MCF 10A (cell line): ENCODE measurements at regions of chr3 and their contacts with region 1.

Region 1: GRCh38 chr3:62665598-62666437 is 209.4 kb downstream of the CADPS start:
- DNase-seq: peak; percentile 85
- H3K4me3 Mint-ChIP-seq: no peak overlapping the region
- H3K27ac Mint-ChIP-seq: no peak overlapping the region
- H3K4me1 Mint-ChIP-seq: peaks cover 7% of the 10 kb centered on the region
- H3K27me3 Mint-ChIP-seq: no peaks in the 10 kb centered on the region
- CTCF ChIP-seq: peak; percentile 86

Region 2: GRCh38 chr3:62615258-62615849 is 50.5 kb before region 1 on chr3:
- CTCF ChIA-PET with region 1: interaction called, 11 read pairs
- POLR2A ChIA-PET with region 1: no interaction called
- intact Hi-C with region 1: no loop called
- DNase-seq: no peak
- H3K4me3 Mint-ChIP-seq: no peak overlapping the region
- H3K27ac Mint-ChIP-seq: no peak overlapping the region
- H3K4me1 Mint-ChIP-seq: peaks cover 34% of the 10 kb centered on the region
- H3K27me3 Mint-ChIP-seq: no peaks in the 10 kb centered on the region
- CTCF ChIP-seq: no peak

Region 3: GRCh38 chr3:62653796-62654195 is 12.0 kb before region 1 on chr3:
- CTCF ChIA-PET with region 1: interaction called, 28 read pairs
- POLR2A ChIA-PET with region 1: no interaction called
- intact Hi-C with region 1: no loop called
- DNase-seq: no peak
- H3K4me3 Mint-ChIP-seq: no peak overlapping the region
- H3K27ac Mint-ChIP-seq: no peak overlapping the region
- H3K4me1 Mint-ChIP-seq: no peaks in the 10 kb centered on the region
- H3K27me3 Mint-ChIP-seq: no peaks in the 10 kb centered on the region
- CTCF ChIP-seq: no peak

Region 4: GRCh38 chr3:62833531-62833930 is 167.7 kb after region 1 on chr3:
- CTCF ChIA-PET with region 1: interaction called, 4 read pairs
- POLR2A ChIA-PET with region 1: no interaction called
- intact Hi-C with region 1: loop called (anchors 2 kb)
- DNase-seq: peak; percentile 18
- H3K4me3 Mint-ChIP-seq: no peak overlapping the region
- H3K27ac Mint-ChIP-seq: no peak overlapping the region
- H3K4me1 Mint-ChIP-seq: peaks cover 5% of the 10 kb centered on the region
- H3K27me3 Mint-ChIP-seq: peaks cover 54% of the 10 kb centered on the region
- CTCF ChIP-seq: peak; percentile 47

Region 5: DNA sequence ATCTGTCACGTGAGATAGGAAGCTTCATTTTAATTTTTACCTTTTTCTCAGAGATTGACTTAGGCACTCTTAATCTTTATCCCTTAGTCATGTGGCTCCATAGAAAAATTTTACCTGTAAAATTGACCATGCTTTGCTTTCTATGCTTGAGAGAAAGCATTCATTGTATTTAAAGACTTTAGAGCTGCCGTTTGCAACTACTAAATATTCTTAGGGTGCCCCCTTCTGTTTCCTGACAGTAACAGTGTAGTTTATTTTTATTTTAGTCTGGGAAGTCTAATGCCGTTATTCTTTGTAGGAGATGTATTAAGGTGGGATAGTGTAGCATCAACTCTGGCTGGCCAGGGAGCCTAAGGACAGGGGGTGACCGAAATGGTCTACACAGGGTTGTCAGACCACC is 527.8 kb after region 1 on chr3:
- CTCF ChIA-PET with region 1: interaction called, 227 read pairs
- POLR2A ChIA-PET with region 1: interaction called, 5 read pairs
- intact Hi-C with region 1: loop called (anchors 1 kb)
- DNase-seq: peak; percentile 26
- H3K4me3 Mint-ChIP-seq: no peak overlapping the region
- H3K27ac Mint-ChIP-seq: no peak overlapping the region
- H3K4me1 Mint-ChIP-seq: no peaks in the 10 kb centered on the region
- H3K27me3 Mint-ChIP-seq: peaks cover 64% of the 10 kb centered on the region
- CTCF ChIP-seq: peak; percentile 52

Region 6: GRCh38 chr3:63240381-63240917 is 574.6 kb after region 1 on chr3:
- CTCF ChIA-PET with region 1: interaction called, 339 read pairs
- POLR2A ChIA-PET with region 1: no interaction called
- intact Hi-C with region 1: no loop called
- DNase-seq: no peak
- H3K4me3 Mint-ChIP-seq: no peak overlapping the region
- H3K27ac Mint-ChIP-seq: no peak overlapping the region
- H3K4me1 Mint-ChIP-seq: no peaks in the 10 kb centered on the region
- H3K27me3 Mint-ChIP-seq: peaks cover 87% of the 10 kb centered on the region
- CTCF ChIP-seq: no peak